Activated CD4-positive, alpha-beta T cell treated with anti-CD3 and anti-CD28 coated beads, Interleukin-2, amount 10 ng/mL, durations not matched to agents 24 days and 14 days (primary cell): ENCODE measurements at regions of chr13 and their contacts with region 1.

Region 1: DNA sequence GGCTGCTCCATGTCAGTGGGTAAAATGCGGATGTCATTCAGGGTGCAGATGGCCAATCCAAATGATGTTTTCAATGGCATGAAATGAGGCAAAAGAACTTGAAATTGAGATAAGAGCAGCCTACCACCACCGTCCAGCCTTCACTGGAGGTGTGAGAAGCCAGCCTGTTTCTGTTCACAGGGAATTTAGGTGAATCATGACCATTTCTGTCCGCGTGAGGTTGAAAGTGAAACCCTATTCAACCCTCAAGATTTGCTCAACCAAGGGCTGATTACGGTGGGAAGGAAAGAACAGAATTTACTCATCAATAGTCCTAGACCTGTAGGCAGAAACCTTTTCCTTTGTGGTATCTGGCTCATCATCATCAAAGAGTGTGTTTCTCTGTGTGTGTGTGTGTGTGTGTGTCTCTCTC is 370.7 kb downstream of the COG6 start:
- DNase-seq: peak; percentile 91
- H3K4me3 Mint-ChIP-seq: peak overlapping the region; percentile 57
- H3K27ac Mint-ChIP-seq: peak overlapping the region; percentile 62
- H3K4me1 Mint-ChIP-seq: peaks cover 35% of the 10 kb centered on the region
- H3K27me3 Mint-ChIP-seq: peaks cover 10% of the 10 kb centered on the region

Region 2: GRCh38 chr13:39655569-39656324 is 370.4 kb before region 1 on chr13 and contains the start of gene COG6:
- intact Hi-C with region 1: no loop called
- DNase-seq: peak; percentile 99
- H3K4me3 Mint-ChIP-seq: peak within 1 kb of the TSS; percentile 92
- H3K27ac Mint-ChIP-seq: peak within 1 kb of the TSS; percentile 92
- H3K4me1 Mint-ChIP-seq: peaks cover 21% of the 10 kb centered on the region
- H3K27me3 Mint-ChIP-seq: peaks cover 11% of the 10 kb centered on the region
- total RNA-seq, gene COG6: 24.3 and 30.3 TPM in 2 replicates

Region 3: GRCh38 chr13:39684531-39685137 is 341.5 kb before region 1 on chr13:
- intact Hi-C with region 1: loop called (anchors 2 kb)
- DNase-seq: no peak
- H3K4me3 Mint-ChIP-seq: no peak overlapping the region
- H3K27ac Mint-ChIP-seq: no peak overlapping the region
- H3K4me1 Mint-ChIP-seq: peaks cover 18% of the 10 kb centered on the region
- H3K27me3 Mint-ChIP-seq: no peaks in the 10 kb centered on the region

Region 4: DNA sequence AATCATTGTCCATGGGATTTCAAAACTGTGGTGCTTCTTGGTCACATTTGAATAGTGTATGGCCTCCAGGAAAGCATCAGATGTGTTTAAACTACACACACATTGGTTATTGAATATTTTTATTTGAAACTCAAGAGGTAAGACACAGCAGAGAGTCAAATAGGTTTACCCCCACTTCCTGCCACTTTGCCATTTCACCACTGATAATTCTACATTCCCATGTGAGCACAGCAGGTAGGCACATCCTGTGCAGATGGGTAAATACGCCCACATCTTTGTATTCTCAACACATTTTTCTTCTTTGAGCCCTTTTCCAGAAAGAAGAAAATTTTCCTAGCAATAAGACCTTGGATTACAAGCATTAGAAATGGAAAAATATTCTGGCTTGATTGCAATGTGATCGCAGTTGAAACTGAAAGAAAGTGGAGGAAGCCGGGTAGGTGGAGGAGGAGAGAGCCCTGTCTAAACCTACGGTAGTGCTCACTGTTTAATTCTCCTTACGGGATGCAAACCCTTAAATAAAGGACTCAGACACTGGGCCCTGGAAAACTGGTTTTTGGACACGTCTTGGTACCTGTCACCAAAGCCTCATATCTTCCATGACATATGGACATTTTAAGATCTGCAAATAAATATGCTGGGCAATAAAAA is 203.0 kb before region 1 on chr13:
- intact Hi-C with region 1: no loop called
- DNase-seq: no peak
- H3K4me3 Mint-ChIP-seq: peak overlapping the region; percentile 62
- H3K27ac Mint-ChIP-seq: no peak overlapping the region
- H3K4me1 Mint-ChIP-seq: peaks cover 20% of the 10 kb centered on the region
- H3K27me3 Mint-ChIP-seq: peaks cover 3% of the 10 kb centered on the region

Region 5: DNA sequence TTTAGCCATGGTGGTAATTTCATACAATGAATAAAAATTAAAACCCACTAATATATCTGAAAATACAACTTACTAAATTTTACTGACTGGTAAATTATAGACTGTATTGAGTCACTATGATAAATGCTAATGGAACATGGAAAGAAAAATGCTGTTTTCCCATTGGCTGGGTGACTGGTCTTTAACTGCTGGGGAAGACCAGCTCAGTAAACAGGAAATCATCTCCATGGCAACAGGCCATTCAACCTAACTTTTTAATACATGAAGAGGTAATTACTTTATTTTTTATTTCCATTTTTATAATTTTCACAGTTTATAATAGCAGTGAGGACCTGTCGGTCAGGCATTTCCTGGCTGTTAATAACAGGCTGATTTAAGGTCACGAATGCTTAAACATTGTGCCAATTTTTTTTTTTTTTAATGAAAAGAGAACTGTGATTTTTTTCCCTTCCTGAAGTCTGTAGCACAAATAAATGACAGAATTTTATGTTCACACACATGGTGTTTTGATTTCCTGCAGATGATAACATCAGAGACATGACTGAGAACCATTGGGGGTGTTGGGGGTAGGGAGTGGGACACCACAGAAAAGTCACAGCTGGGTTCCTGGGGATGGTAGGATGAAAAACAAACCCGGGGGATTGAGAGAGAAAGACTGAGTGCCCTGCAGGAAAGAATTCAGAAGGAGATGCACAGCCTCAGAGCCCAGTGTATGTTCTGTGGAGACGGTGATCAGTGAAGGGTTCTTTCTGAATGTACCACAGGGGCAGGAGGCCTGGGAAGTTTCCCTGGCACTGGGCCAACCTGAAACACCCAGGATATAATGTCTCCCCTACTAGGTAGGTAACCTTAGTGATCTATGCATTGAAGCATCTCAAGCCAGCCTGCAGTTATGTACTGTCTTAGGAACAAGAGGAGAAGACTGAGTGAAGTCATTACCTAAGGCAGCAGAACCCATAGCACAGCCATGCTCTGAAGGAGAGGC is 73.6 kb before region 1 on chr13:
- intact Hi-C with region 1: loop called (anchors 2 kb)
- DNase-seq: no peak
- H3K4me3 Mint-ChIP-seq: no peak overlapping the region
- H3K27ac Mint-ChIP-seq: peak overlapping the region; percentile 54
- H3K4me1 Mint-ChIP-seq: peaks cover 30% of the 10 kb centered on the region
- H3K27me3 Mint-ChIP-seq: peaks cover 5% of the 10 kb centered on the region

Region 6: GRCh38 chr13:39998166-39998565 is 28.0 kb before region 1 on chr13:
- intact Hi-C with region 1: no loop called
- DNase-seq: peak; percentile 74
- H3K4me3 Mint-ChIP-seq: peak overlapping the region; percentile 41
- H3K27ac Mint-ChIP-seq: peak overlapping the region; percentile 35
- H3K4me1 Mint-ChIP-seq: peaks cover 18% of the 10 kb centered on the region
- H3K27me3 Mint-ChIP-seq: peaks cover 12% of the 10 kb centered on the region

Region 7: DNA sequence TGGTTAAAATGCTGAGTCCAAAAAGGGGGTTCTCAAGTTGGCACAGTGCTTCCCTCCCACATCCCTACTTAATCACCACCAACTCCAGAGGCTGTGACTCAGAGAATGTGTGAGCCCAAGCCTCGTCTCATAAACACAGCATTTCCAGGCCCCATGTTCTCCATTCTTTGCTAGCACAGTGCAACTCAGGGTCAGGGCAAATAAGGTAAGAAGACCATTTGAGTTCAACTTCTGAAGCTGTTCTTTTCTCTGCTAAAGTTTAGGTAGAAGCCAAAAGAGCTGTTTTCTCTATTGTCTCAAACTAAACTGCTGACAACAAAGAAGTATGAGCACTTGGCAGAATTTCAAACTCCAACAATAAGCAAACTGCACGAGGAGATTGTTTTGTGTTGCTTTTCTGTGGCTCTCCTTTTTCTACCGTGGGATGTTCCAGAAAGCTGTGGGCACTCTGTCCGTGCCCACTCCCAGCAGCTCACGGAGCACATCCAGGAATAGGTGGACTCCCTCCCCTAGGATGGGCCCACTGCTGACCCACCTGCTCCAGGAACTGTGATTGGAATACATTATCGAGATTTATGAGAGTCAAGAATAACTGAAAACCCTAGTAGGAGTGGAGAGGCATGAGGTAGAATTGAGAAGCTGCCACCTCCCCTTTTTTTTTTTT is 123.6 kb after region 1 on chr13:
- intact Hi-C with region 1: loop called (anchors 1 kb)
- DNase-seq: no peak
- H3K4me3 Mint-ChIP-seq: no peak overlapping the region
- H3K27ac Mint-ChIP-seq: peak overlapping the region; percentile 42
- H3K4me1 Mint-ChIP-seq: peaks cover 49% of the 10 kb centered on the region
- H3K27me3 Mint-ChIP-seq: no peaks in the 10 kb centered on the region

Region 8: DNA sequence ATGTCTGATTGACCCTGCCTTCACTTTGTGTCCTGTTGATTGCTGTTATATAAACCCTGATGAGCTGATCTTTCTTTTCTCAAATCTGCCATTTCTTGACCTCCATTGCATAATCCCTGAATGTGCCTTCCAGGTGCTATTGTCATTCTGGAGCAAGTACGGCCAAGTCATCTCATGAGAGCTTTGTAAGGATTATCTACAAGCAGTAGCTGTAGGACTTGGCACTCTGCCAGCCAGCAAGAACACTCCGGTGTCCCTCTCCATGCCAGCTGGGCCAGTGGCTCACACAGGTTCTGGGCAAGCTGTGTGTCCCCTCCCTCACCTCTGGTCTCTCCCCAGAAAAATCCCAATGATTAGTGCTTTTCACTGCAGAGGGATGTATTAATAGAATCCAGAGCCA is 292.2 kb after region 1 on chr13:
- intact Hi-C with region 1: loop called (anchors 5 kb)
- DNase-seq: no peak
- H3K4me3 Mint-ChIP-seq: no peak overlapping the region
- H3K27ac Mint-ChIP-seq: peak overlapping the region; percentile 47
- H3K4me1 Mint-ChIP-seq: peaks cover 58% of the 10 kb centered on the region
- H3K27me3 Mint-ChIP-seq: no peaks in the 10 kb centered on the region

Region 9: DNA sequence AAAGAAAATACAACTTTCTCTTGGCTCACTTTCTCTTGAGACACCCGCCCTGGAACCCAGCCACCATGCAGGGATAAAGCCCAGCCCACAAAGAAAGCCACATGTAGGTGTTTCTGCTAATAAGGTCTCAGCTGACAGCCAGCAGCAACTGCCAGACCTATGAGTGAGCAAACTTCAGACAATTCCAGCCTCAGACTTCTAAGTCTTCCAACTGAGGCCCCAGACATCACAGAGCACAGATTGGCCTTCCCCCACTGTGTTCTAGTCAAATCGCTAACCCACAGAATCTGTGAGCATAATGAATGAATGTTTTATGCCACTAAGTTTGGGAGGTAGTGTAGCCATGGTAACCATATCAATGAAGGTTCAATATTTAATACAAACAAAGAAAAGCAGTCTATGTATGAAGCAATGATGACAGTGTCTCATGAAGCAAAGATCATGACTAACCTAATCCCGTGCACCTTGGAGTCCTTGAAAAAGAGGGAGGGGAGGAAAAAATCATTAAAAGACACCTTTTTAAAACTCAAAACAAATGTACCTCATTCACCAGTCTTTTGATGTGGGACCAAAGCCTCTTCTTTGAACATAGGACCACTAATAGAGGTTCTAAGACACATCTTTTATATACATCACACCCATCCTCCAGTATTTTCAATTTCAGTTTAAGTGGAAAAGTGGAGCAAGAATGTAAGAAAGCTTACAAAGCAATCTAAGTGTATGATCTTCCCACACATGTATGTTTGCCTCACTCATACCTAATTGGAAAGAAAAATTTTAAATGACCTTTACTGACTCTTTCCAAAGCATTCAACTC is 738.6 kb after region 1 on chr13:
- intact Hi-C with region 1: loop called (anchors 1 kb)
- DNase-seq: peak; percentile 69
- H3K4me3 Mint-ChIP-seq: peak overlapping the region; percentile 59
- H3K27ac Mint-ChIP-seq: peak overlapping the region; percentile 96
- H3K4me1 Mint-ChIP-seq: peaks cover 42% of the 10 kb centered on the region
- H3K27me3 Mint-ChIP-seq: no peaks in the 10 kb centered on the region